Activated naive CD4-positive, alpha-beta T cell treated with anti-CD3 and anti-CD28 coated beads for 36 hours (primary cell): ENCODE measurements at regions of chr3 and their contacts with region 1.

Region 1: DNA sequence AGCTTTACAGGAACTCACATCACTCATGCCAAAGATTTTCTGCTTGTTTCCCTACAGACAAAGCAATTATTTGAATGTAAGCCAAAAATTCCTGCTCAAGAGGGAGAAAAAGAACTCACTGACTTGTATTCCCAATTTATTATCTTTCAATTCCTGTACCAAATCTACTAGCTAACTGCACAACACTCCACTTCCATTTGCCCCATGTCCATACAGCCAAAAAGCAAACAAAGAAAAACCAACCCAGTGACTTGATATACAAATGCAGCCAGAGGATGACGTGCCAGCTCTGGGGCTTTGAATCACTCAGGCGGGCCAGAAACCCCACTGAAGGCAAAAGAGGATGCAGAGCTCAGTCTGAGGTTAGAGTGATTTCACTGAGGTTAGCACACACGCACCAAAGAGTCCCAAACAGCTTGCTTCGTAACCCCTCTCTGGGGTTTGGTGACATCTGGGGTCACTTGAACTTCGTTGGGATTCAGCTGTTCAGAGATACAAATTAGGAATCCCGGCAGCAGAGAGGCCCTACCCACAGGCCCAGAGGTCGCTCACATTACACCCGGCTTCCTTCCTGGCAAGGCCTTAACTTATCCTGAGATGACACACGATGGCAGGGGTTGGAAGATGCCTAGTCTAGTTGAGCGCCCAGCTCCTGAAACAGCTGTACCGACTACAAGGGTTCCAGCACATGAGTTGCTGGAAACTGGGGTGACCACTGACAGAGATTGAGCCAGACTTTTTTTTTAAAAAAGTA is 1.6 kb downstream of the RFTN1 start:
- DNase-seq: peak; percentile 95
- H3K4me3 Mint-ChIP-seq: peak overlapping the region; percentile 92
- H3K27ac Mint-ChIP-seq: peak overlapping the region; percentile 100
- H3K4me1 Mint-ChIP-seq: peaks cover 73% of the 10 kb centered on the region
- H3K27me3 Mint-ChIP-seq: no peaks in the 10 kb centered on the region

Region 2: GRCh38 chr3:15601397-15602145 is 910.3 kb before region 1 on chr3 and contains the starts of genes BTD and HACL1:
- CTCF ChIA-PET with region 1: no interaction called
- intact Hi-C with region 1: loop called (anchors 1 kb)
- DNase-seq: peak; percentile 99
- H3K4me3 Mint-ChIP-seq: peak within 1 kb of the TSS; percentile 99
- H3K27ac Mint-ChIP-seq: peak within 1 kb of the TSS; percentile 96
- H3K4me1 Mint-ChIP-seq: peaks cover 46% of the 10 kb centered on the region
- H3K27me3 Mint-ChIP-seq: no peaks in the 10 kb centered on the region
- total RNA-seq, gene BTD: 8.7 to 9.7 TPM
- total RNA-seq, gene HACL1: 25.3 to 26.5 TPM

Region 3: GRCh38 chr3:16236856-16237393 is 274.9 kb before region 1 on chr3:
- CTCF ChIA-PET with region 1: no interaction called
- intact Hi-C with region 1: no loop called
- DNase-seq: no peak
- H3K4me3 Mint-ChIP-seq: no peak overlapping the region
- H3K27ac Mint-ChIP-seq: no peak overlapping the region
- H3K4me1 Mint-ChIP-seq: no peaks in the 10 kb centered on the region
- H3K27me3 Mint-ChIP-seq: no peaks in the 10 kb centered on the region

Region 4: DNA sequence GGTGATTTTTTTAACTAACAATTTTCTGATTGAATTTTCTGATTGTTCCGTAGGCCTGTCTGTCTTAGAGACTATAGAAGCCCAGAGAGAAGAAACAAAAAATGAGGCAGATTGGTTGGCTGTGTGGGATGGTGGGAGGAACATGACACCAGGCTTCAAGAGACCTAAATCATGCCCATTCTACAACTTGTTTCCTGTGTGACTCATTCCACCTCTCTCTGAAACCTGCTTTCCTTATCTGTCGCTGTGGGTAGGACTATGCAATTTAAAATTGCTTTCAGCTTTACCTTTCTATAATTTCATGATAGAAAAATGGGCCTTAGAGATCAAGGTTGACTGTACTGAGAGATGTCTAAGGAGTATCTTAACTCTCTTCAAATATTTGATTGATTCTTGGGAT is 202.3 kb before region 1 on chr3:
- CTCF ChIA-PET with region 1: no interaction called
- intact Hi-C with region 1: loop called (anchors 1 kb)
- DNase-seq: peak; percentile 76
- H3K4me3 Mint-ChIP-seq: peak overlapping the region; percentile 22
- H3K27ac Mint-ChIP-seq: peak overlapping the region; percentile 92
- H3K4me1 Mint-ChIP-seq: peaks cover 91% of the 10 kb centered on the region
- H3K27me3 Mint-ChIP-seq: no peaks in the 10 kb centered on the region

Region 5: DNA sequence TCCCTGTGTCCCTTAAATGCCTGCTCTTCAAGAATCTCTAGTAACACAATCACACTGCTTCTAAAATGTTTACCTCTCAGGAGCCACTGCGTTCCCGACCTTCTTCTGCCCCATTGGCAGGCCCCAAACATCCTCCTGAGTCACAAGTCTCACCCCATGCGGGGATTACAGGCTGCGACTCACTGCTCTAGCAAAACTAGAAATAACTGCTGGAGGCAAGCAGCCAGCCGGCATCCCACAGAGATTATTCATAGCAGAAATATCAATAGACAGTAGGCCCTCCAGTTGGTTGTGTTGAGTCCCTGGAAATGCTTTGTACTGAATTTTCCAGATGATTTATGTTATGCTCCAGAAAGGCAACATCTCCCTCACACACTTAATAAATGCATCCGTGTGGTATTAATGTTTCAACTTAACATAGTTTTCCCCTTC is 63.2 kb before region 1 on chr3:
- CTCF ChIA-PET with region 1: no interaction called
- intact Hi-C with region 1: loop called (anchors 1 kb)
- DNase-seq: peak; percentile 78
- H3K4me3 Mint-ChIP-seq: no peak overlapping the region
- H3K27ac Mint-ChIP-seq: peak overlapping the region; percentile 43
- H3K4me1 Mint-ChIP-seq: peaks cover 36% of the 10 kb centered on the region
- H3K27me3 Mint-ChIP-seq: no peaks in the 10 kb centered on the region

Region 6: DNA sequence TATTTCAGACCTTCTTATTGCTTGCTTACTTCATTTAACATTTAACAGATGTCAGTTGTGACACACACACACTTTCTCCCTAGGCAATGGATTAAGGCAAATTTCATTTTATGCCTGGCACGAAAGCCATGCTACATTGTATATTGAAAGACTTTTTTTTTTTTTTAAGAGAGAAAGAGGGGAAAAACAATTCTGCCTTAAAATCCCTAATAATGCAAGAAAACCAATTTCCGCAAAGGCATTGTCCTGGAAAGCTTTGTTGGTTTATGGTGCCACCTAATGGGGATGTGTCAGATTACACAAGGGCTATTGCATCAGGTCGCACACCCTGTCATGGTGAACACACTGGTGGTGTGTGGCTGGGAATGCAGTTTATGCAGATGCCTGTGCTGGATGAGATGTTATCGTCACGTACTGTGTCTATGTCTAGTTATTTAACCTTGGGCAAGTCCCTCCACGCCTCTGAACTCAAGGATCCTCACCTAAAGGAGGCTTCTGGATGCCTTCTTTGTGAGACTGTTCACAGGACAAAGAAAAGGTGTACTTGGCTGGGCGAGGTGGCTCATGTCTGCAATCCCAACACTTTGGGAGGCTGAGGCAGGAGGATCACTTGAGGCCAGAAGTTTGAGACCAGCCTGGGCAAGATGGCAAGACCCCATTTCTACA is 39.0 kb after region 1 on chr3:
- CTCF ChIA-PET with region 1: interaction called, 11 read pairs
- intact Hi-C with region 1: loop called (anchors 1 kb)
- DNase-seq: peak; percentile 94
- H3K4me3 Mint-ChIP-seq: peak overlapping the region; percentile 22
- H3K27ac Mint-ChIP-seq: peak overlapping the region; percentile 77
- H3K4me1 Mint-ChIP-seq: peaks cover 17% of the 10 kb centered on the region
- H3K27me3 Mint-ChIP-seq: no peaks in the 10 kb centered on the region

Region 7: GRCh38 chr3:16632395-16632794 is 120.5 kb after region 1 on chr3:
- CTCF ChIA-PET with region 1: no interaction called
- intact Hi-C with region 1: no loop called
- DNase-seq: no peak
- H3K4me3 Mint-ChIP-seq: no peak overlapping the region
- H3K27ac Mint-ChIP-seq: no peak overlapping the region
- H3K4me1 Mint-ChIP-seq: no peaks in the 10 kb centered on the region
- H3K27me3 Mint-ChIP-seq: no peaks in the 10 kb centered on the region

Region 8: GRCh38 chr3:16783051-16783450 is 271.2 kb after region 1 on chr3:
- CTCF ChIA-PET with region 1: no interaction called
- intact Hi-C with region 1: no loop called
- DNase-seq: no peak
- H3K4me3 Mint-ChIP-seq: no peak overlapping the region
- H3K27ac Mint-ChIP-seq: no peak overlapping the region
- H3K4me1 Mint-ChIP-seq: no peaks in the 10 kb centered on the region
- H3K27me3 Mint-ChIP-seq: no peaks in the 10 kb centered on the region

Region 9: GRCh38 chr3:17023006-17023664 is 511.3 kb after region 1 on chr3:
- CTCF ChIA-PET with region 1: no interaction called
- intact Hi-C with region 1: loop called (anchors 5 kb)
- DNase-seq: peak; percentile 82
- H3K4me3 Mint-ChIP-seq: peak overlapping the region; percentile 60
- H3K27ac Mint-ChIP-seq: peak overlapping the region; percentile 90
- H3K4me1 Mint-ChIP-seq: peaks cover 73% of the 10 kb centered on the region
- H3K27me3 Mint-ChIP-seq: no peaks in the 10 kb centered on the region